ENCODE measurements at regions of chr3 and their contacts with region 1.

Region 1: DNA sequence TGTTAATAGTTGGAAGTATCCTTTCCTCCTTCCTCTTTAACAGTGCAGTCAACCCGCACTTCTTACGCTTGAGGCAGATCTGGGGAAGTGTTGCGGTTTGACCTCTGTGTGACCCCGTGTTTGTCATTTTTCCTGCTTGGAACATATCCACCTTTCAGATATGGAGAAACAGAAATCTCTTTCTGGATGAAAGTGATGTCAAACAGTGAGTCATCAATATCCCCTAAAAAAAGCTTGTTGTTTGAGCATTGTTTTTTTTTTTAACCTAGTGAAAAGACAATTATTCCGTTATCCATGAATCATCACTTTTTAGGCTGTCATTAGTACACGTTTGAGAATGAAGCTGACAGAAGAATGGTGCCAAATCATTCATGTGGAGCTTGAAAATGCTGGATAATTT is 293.7 kb downstream of the ARPP21 start:
- DNase-seq: peak; percentile 99
- H3K4me3 ChIP-seq: no peak overlapping the region
- H3K27ac ChIP-seq: peak overlapping the region; percentile 71
- H3K4me1 ChIP-seq: peaks cover 53% of the 10 kb centered on the region
- H3K27me3 ChIP-seq: no peaks in the 10 kb centered on the region
- CTCF ChIP-seq: no peak
- POLR2A ChIP-seq: no peak

Region 2: GRCh38 chr3:35322070-35322469 is 610.9 kb before region 1 on chr3:
- CTCF ChIA-PET with region 1: interaction called, 3 read pairs
- POLR2A ChIA-PET with region 1: no interaction called
- dilution Hi-C with region 1: no loop called
- intact Hi-C with region 1: loop called (anchors 5 kb)
- DNase-seq: peak; percentile 37
- H3K4me3 ChIP-seq: no peak overlapping the region
- H3K27ac ChIP-seq: no peak overlapping the region
- H3K4me1 ChIP-seq: peaks cover 4% of the 10 kb centered on the region
- H3K27me3 ChIP-seq: peaks cover 3 to 9% of the 10 kb centered on the region in 2 experiments
- CTCF ChIP-seq: no peak
- POLR2A ChIP-seq: no peak

Region 3: GRCh38 chr3:35383719-35384555 is 549.1 kb before region 1 on chr3:
- CTCF ChIA-PET with region 1: no interaction called
- POLR2A ChIA-PET with region 1: no interaction called
- dilution Hi-C with region 1: no loop called
- intact Hi-C with region 1: loop called (anchors 2 kb)
- DNase-seq: peak; percentile 95
- H3K4me3 ChIP-seq: peak overlapping the region in 1 of 3 experiments; percentile 39
- H3K27ac ChIP-seq: peak overlapping the region; percentile 92
- H3K4me1 ChIP-seq: peaks cover 22% of the 10 kb centered on the region
- H3K27me3 ChIP-seq: no peaks in the 10 kb centered on the region
- CTCF ChIP-seq: no peak
- POLR2A ChIP-seq: no peak

Region 4: DNA sequence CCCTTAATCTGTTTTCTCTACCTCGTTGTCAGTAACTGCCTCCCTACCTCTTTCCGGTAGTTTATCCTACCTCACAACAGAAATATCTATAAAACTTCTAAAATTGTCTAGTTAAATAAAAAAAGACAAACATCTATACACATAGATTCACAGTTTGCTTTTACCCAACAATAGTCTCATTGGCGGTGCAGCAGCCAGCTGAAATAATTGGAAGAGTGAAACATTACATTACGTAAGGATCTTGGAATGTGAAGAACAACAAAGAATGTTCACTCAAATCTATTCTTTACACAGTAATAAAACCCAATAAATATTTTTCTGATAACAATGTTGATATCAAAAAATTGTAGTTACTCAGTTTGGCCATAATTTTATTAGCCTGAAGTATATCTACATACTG is 409.2 kb before region 1 on chr3:
- CTCF ChIA-PET with region 1: no interaction called
- POLR2A ChIA-PET with region 1: no interaction called
- dilution Hi-C with region 1: no loop called
- intact Hi-C with region 1: loop called (anchors 5 kb)
- DNase-seq: peak; percentile 66
- H3K4me3 ChIP-seq: no peak overlapping the region
- H3K27ac ChIP-seq: peak overlapping the region; percentile 68
- H3K4me1 ChIP-seq: peaks cover 10% of the 10 kb centered on the region
- H3K27me3 ChIP-seq: no peaks in the 10 kb centered on the region
- CTCF ChIP-seq: no peak
- POLR2A ChIP-seq: no peak

Region 5: GRCh38 chr3:35908366-35909232 is 24.4 kb before region 1 on chr3:
- CTCF ChIA-PET with region 1: interaction called, 27 read pairs
- POLR2A ChIA-PET with region 1: no interaction called
- dilution Hi-C with region 1: no loop called
- intact Hi-C with region 1: no loop called
- DNase-seq: peak; percentile 84
- H3K4me3 ChIP-seq: no peak overlapping the region
- H3K27ac ChIP-seq: no peak overlapping the region
- H3K4me1 ChIP-seq: no peaks in the 10 kb centered on the region
- H3K27me3 ChIP-seq: peaks cover 2 to 5% of the 10 kb centered on the region in 2 experiments
- CTCF ChIP-seq: peak; percentile 64 to 73
- POLR2A ChIP-seq: no peak

Region 6: GRCh38 chr3:35969406-35969805 is 36.4 kb after region 1 on chr3:
- CTCF ChIA-PET with region 1: no interaction called
- POLR2A ChIA-PET with region 1: no interaction called
- dilution Hi-C with region 1: no loop called
- intact Hi-C with region 1: no loop called
- DNase-seq: no peak
- H3K4me3 ChIP-seq: no peak overlapping the region
- H3K27ac ChIP-seq: no peak overlapping the region
- H3K4me1 ChIP-seq: no peaks in the 10 kb centered on the region
- H3K27me3 ChIP-seq: peaks cover 2 to 5% of the 10 kb centered on the region in 2 experiments
- CTCF ChIP-seq: no peak
- POLR2A ChIP-seq: no peak

Measured in endothelial cell of umbilical vein (primary cell).